ENCODE measurements at regions of chr14 and their contacts with region 1.

Region 1: GRCh38 chr14:78959674-78960264 is 789.6 kb downstream of the NRXN3 start:
- DNase-seq: peak; percentile 51
- H3K4me3 ChIP-seq: no peak overlapping the region
- H3K27ac ChIP-seq: no peak overlapping the region
- H3K27me3 ChIP-seq: no peaks in the 10 kb centered on the region
- CTCF ChIP-seq: peak; percentile 93

Region 2: DNA sequence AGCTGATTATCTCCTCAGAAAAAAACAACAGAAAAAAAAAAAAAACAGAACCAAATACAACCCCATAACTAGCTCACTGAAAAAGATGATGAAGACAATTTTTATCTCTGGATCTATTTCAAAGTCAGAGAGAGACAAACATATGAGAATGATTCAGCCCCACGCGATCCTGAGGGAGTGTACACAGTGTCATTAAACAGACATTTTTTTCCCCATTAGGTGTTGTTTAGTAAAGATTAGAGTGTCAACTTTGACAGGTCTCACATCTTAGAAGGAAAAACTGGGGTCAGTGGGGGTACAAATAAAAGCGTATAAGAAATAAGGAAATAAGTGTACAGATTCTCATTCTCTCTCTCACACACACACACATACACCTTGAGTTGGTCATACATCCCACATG is 154.2 kb before region 1 on chr14:
- CTCF ChIA-PET with region 1: no interaction called
- POLR2A ChIA-PET with region 1: no interaction called
- DNase-seq: no peak
- H3K4me3 ChIP-seq: no peak overlapping the region
- H3K27ac ChIP-seq: no peak overlapping the region
- H3K27me3 ChIP-seq: no peaks in the 10 kb centered on the region
- CTCF ChIP-seq: no peak

Region 3: DNA sequence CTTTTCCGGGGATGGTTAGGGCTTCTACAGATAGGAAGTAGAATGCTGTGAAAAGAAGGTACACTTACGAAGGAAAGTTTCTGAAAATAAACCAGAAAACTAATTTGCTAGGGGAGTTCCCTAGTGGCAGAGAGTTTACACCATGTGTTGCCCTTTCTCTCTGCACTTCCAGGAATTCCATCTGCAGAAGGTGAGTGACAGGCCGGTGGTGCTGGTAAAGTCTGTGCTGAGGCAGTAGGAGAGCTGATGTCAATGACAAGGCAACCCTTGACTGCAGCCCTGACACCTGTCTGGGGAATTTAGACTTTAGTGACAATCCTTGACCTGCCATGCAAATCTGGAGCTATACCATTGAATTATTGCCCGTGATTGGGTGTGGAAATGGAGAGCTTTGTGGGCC is 101.8 kb before region 1 on chr14:
- CTCF ChIA-PET with region 1: no interaction called
- POLR2A ChIA-PET with region 1: no interaction called
- DNase-seq: no peak
- H3K4me3 ChIP-seq: no peak overlapping the region
- H3K27ac ChIP-seq: no peak overlapping the region
- H3K27me3 ChIP-seq: no peaks in the 10 kb centered on the region
- CTCF ChIP-seq: no peak

Region 4: DNA sequence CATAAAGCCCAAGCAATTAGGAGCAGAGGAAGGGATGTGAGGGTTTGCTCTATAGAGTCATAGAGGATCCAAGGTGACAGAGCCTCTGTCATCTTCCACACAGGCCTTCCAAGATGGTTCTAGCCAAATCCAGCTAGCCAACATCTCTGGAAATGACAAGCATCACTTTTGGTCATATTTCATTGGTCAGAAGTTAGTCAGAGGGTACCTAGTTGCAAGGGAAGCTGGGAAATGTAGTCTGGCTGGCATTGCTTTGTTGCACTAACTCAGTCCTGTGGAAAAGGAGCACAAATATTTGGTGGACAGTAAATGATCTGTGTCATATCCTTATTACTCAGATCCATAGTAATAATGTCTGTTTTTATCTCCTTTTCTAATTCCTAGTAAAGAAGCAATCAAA is 73.9 kb before region 1 on chr14:
- CTCF ChIA-PET with region 1: no interaction called
- POLR2A ChIA-PET with region 1: no interaction called
- DNase-seq: no peak
- H3K4me3 ChIP-seq: no peak overlapping the region
- H3K27ac ChIP-seq: no peak overlapping the region
- H3K27me3 ChIP-seq: no peaks in the 10 kb centered on the region
- CTCF ChIP-seq: no peak

Region 5: GRCh38 chr14:78974691-78975090 is 14.9 kb after region 1 on chr14:
- CTCF ChIA-PET with region 1: interaction called, 38 read pairs
- POLR2A ChIA-PET with region 1: interaction called, 4 read pairs
- DNase-seq: no peak
- H3K4me3 ChIP-seq: no peak overlapping the region
- H3K27ac ChIP-seq: no peak overlapping the region
- H3K27me3 ChIP-seq: no peaks in the 10 kb centered on the region
- CTCF ChIP-seq: no peak

Region 6: DNA sequence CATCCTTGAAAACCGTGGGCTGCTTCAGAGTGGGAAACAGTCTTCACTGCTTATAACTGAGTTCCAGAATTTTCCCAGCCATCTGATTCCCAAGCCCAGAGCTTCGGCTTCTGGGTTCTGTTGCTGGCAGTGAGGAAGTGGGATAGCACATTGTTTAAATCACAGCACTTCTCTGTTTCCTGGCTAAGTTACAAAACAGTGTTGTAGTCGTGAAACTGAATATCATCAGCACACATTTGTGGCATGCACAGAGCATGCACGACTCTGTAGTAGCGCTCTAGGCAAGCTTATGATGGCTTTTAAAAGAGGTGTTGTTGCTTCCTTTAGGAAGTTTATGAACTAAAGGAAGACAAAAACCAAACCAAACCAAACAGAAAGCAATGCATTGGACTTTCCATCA is 215.9 kb after region 1 on chr14:
- CTCF ChIA-PET with region 1: no interaction called
- POLR2A ChIA-PET with region 1: no interaction called
- DNase-seq: no peak
- H3K4me3 ChIP-seq: no peak overlapping the region
- H3K27ac ChIP-seq: no peak overlapping the region
- H3K27me3 ChIP-seq: no peaks in the 10 kb centered on the region
- CTCF ChIP-seq: no peak